Aorta (tissue), 5 donors: ENCODE measurements at regions of chr6 and their contacts with region 1.

Region 1: GRCh38 chr6:42547407-42548329 is 16.2 kb upstream of the UBR2 start:
- DNase-seq: peak; percentile 89 to 94
- ATAC-seq: peak; percentile 98
- H3K4me3 ChIP-seq: peak overlapping the region; percentile 57
- H3K27ac ChIP-seq: peak overlapping the region in 1 of 2 donors; percentile 23
- H3K4me1 ChIP-seq: no peaks in the 10 kb centered on the region
- H3K27me3 ChIP-seq: no peaks in the 10 kb centered on the region

Region 2: GRCh38 chr6:42075159-42075838 is 472.4 kb before region 1 on chr6:
- intact Hi-C with region 1: loop called in 1 of 2 experiments (anchors 10 kb)
- DNase-seq: peak; percentile 77 to 89
- ATAC-seq: peak; percentile 73
- H3K4me3 ChIP-seq: no peak overlapping the region
- H3K27ac ChIP-seq: no peak overlapping the region
- H3K4me1 ChIP-seq: no peaks in the 10 kb centered on the region
- H3K27me3 ChIP-seq: no peaks in the 10 kb centered on the region

Region 3: GRCh38 chr6:42453031-42453653 is 94.5 kb before region 1 on chr6:
- intact Hi-C with region 1: loop called in 1 of 2 experiments (anchors 5 kb)
- DNase-seq: peak; percentile 93 to 94
- ATAC-seq: peak; percentile 94
- H3K4me3 ChIP-seq: peak overlapping the region; percentile 66 to 84
- H3K27ac ChIP-seq: peak overlapping the region; percentile 2 to 23
- H3K4me1 ChIP-seq: no peaks in the 10 kb centered on the region
- H3K27me3 ChIP-seq: no peaks in the 10 kb centered on the region